Mammary epithelial cell (primary cell): ENCODE measurements at regions of chrX and their contacts with region 1.

Region 1: DNA sequence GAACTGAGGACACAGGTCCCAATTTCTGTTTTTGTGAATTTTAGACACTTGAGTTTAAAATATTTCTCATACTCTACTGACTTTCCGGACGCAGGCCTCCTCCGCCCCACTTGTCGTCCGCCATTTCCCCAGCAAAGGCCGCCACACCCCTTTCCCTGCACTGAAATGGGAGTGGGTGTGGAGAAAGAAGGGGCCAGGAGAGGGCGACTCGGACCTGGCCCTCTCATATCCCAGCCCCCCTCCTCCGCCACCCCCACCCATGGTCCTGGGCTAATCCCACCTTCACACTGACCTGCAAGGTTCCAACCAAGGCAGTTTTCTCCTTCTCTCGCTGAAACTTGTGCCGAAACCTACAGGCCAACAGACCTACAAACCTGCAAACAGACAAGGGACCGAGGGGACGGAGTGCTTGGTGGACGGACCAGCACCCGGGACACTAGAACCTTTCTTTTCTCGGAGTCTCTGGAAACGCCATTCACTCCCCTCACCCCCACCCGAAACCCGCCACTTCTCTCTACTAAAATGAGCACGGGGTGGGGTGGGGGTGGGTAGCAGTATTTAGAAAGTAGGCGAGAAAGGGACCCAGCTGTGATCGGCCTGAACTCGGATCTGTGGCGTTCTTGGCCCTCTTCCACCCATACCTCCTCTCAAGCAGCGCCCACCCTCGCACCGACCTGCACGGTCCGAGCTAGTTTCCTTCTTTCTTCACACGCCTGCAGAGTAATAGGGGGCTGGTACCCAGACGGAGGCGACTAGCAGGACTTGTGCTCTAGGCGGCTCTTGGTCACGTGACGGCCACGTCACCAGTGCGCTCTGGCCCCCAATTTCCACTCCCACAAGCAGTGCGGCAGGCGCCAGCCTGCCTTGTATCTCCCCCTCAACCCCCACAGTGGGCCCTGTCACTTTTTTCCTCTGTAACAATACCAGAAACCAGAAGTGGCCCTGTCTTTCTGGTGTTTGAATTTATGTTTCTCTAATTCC is at the start of gene ARMCX6:
- DNase-seq: peak; percentile 46
- H3K4me3 ChIP-seq: peak within 1 kb of the TSS; percentile 40 to 65 (median 62)
- H3K27ac ChIP-seq: peak within 1 kb of the TSS; percentile 49
- H3K4me1 ChIP-seq: no peaks in the 10 kb centered on the region
- H3K27me3 ChIP-seq: no peaks in the 10 kb centered on the region
- CTCF ChIP-seq: peak; percentile 16 to 46
- total RNA-seq, gene ARMCX6: 29.5 to 36.1 TPM

Region 2: DNA sequence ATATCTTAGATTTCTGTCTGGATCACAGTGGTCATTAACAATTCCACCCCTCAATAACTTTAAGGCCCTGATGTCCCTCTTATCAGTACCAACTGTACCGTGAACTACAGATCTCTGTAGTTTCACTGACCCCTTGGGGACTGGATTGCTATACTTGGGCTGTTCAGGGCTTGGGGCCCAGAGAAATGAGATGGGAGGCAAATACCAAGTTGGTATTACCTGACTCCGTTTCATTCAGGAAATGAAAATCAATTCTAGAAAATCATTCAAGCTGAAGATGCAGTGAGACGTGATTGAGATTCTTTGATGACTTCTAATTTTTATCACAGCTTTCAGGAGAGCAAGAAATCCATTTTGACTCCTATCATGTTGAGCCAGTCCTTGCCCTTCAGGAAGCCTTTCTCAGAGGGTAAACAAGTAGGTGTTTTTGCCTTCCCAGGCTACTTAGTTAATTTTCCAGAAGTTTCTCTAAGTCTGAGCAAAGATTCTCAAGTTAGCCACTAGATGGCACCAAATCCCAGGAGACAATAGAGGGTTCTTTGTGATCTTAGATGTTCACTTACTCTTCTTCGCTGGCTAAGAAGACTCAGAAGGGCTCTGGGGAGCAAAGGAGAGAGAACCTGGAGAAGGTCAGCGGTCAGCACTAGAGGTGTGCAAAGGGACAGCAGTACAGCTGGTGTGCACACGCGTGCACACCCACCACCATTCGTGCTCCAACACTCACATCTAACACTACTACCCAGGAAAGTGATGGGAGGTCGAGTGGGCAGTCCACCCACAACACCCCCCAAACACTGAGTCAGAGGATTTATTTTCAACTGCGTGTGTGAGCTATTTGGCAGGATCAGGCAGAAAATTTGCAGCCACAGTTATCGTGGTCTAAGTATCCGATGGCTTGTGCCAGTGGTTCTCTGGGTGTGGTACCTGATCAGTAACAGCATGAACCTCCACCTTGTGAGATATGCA is 202.0 kb before region 1 on chrX:
- CTCF ChIA-PET with region 1: no interaction called
- dilution Hi-C with region 1: no loop called
- in situ Hi-C with region 1: no loop called
- intact Hi-C with region 1: loop called (anchors 5 kb)
- DNase-seq: peak; percentile 53
- H3K4me3 ChIP-seq: no peak overlapping the region
- H3K27ac ChIP-seq: no peak overlapping the region
- H3K4me1 ChIP-seq: peaks cover 3% of the 10 kb centered on the region
- H3K27me3 ChIP-seq: no peaks in the 10 kb centered on the region
- CTCF ChIP-seq: peak; percentile 62 to 78

Region 3: DNA sequence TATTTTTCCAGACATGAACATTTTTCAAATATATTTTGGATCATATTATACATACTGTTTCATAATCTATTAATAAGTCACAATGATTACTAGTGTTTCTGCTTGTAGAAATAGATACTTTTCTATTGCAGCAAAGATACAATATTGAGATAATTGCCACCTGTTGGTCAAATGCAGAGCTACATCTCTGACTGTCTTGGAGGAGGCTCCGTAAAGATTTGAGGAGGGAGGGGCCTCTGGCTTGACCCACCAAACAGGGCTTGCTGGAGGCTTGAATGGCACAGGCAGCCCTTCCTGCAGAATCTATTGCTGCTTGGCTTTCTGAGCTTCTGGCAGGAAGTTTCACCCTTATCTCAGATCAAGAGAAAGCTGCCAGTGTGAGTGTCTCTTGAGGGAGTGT is 141.5 kb after region 1 on chrX:
- CTCF ChIA-PET with region 1: interaction called, 4 read pairs
- dilution Hi-C with region 1: no loop called
- in situ Hi-C with region 1: no loop called
- intact Hi-C with region 1: loop called (anchors 5 kb)
- DNase-seq: peak; percentile 1
- H3K4me3 ChIP-seq: no peak overlapping the region
- H3K27ac ChIP-seq: no peak overlapping the region
- H3K4me1 ChIP-seq: no peaks in the 10 kb centered on the region
- H3K27me3 ChIP-seq: no peaks in the 10 kb centered on the region
- CTCF ChIP-seq: peak; percentile 44 to 55

Region 4: GRCh38 chrX:101799387-101799786 is 181.9 kb after region 1 on chrX:
- CTCF ChIA-PET with region 1: no interaction called
- dilution Hi-C with region 1: no loop called
- in situ Hi-C with region 1: no loop called
- intact Hi-C with region 1: loop called (anchors 5 kb)
- DNase-seq: peak; percentile 78
- H3K4me3 ChIP-seq: no peak overlapping the region
- H3K27ac ChIP-seq: no peak overlapping the region
- H3K4me1 ChIP-seq: no peaks in the 10 kb centered on the region
- H3K27me3 ChIP-seq: no peaks in the 10 kb centered on the region
- CTCF ChIP-seq: peak; percentile 60 to 70